Vagina (tissue), 2 donors: ENCODE measurements at regions of chr11 and their contacts with region 1.

Region 1: GRCh38 chr11:111446404-111447111 is 65.6 kb downstream of the BTG4 start:
- DNase-seq: no peak
- H3K4me3 ChIP-seq: no peak overlapping the region
- H3K27ac ChIP-seq: no peak overlapping the region
- H3K4me1 ChIP-seq: peaks cover 2% of the 10 kb centered on the region
- H3K27me3 ChIP-seq: no peaks in the 10 kb centered on the region
- CTCF ChIP-seq: peak; percentile 81 to 94 (median 86)
- POLR2A ChIP-seq: no peak

Region 2: GRCh38 chr11:111001986-111002611 is 444.5 kb before region 1 on chr11:
- intact Hi-C with region 1: loop called (anchors 5 kb)
- DNase-seq: no peak
- H3K4me3 ChIP-seq: no peak overlapping the region
- H3K27ac ChIP-seq: peak overlapping the region; percentile 61
- H3K4me1 ChIP-seq: peaks cover 12% of the 10 kb centered on the region
- H3K27me3 ChIP-seq: no peaks in the 10 kb centered on the region
- CTCF ChIP-seq: no peak
- POLR2A ChIP-seq: no peak

Region 3: DNA sequence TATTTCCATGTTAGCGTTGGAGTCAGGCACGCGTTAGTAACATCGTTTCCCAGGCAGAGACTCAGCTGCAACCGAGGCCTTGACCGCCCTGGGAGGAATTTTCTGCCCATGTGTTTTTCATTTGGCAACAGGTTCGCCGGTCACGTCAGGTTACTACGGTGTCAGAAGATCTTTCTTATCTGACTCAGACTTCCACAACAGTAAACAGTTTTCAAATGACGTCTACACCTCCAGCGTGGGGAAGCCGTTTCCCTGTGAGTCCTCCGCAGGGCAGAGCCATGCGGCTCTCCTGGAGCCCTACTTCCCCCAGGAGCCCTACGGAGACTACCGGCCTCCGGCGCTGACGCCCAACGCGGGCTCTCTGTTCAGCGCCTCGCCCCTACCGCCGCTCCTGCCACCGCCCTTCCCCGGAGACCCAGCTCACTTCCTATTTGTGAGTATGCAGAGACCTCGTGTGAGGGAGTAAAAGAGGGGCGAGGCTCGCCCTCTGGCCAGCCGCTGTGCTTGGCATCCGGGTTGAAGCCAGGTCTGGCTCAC is 162.5 kb before region 1 on chr11:
- intact Hi-C with region 1: loop called (anchors 5 kb)
- DNase-seq: no peak
- H3K4me3 ChIP-seq: no peak overlapping the region
- H3K27ac ChIP-seq: no peak overlapping the region
- H3K4me1 ChIP-seq: peaks cover 7% of the 10 kb centered on the region
- H3K27me3 ChIP-seq: no peaks in the 10 kb centered on the region
- CTCF ChIP-seq: no peak
- POLR2A ChIP-seq: no peak